ENCODE measurements at regions of chr11 and their contacts with region 1.

Region 1: DNA sequence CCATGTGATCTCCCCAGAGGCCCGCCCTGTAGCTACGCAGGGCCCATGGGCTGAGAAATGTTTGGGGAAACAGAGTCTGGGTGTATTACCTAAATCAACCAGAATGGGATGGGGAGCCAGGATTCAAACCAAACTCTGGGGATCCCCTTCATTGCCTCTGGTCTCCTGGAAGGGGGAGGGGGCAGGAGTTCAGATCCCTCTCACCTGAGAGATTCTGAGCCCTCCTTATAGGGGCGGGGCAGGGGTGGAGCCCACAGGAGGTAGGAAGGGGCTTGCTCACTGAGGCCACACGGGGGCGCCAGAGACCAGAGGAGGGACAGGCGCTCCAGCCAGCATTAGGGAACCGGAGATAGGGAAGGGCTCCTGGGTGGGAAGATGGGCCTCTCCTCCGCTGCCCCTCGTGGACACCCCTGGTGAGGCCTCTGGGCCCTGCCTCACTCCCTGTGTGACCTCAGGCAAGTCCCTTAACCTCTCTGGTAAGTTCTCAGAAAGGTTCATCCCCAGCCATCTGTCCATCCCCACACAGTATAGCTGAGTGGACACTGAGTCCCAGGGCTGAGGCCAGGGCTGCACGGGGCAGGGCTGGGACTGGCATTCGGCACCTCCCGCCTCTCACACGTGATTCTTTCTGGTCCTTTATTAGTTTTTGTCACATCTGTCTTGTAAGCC is 2.7 kb upstream of the CDC42BPG start:
- DNase-seq: peak; percentile 93 to 95 (median 94)
- ATAC-seq: peak; percentile 80 to 86 (median 83)
- H3K4me3 ChIP-seq: no peak overlapping the region
- H3K27ac ChIP-seq: no peak overlapping the region
- H3K4me1 ChIP-seq: peaks cover 0 to 24% (median 10%) of the 10 kb centered on the region in 4 donors
- H3K27me3 ChIP-seq: no peaks in the 10 kb centered on the region
- CTCF ChIP-seq: peak; percentile 99
- POLR2A ChIP-seq: no peak

Region 2: GRCh38 chr11:64787526-64788320 is 59.4 kb before region 1 on chr11:
- intact Hi-C with region 1: loop called in 1 of 2 experiments (anchors 10 kb)
- DNase-seq: peak; percentile 71 to 75 (median 71)
- ATAC-seq: peak; percentile 76 to 84 (median 84)
- H3K4me3 ChIP-seq: no peak overlapping the region
- H3K27ac ChIP-seq: no peak overlapping the region
- H3K4me1 ChIP-seq: no peaks in the 10 kb centered on the region
- H3K27me3 ChIP-seq: no peaks in the 10 kb centered on the region
- CTCF ChIP-seq: peak; percentile 66 to 77 (median 72)
- POLR2A ChIP-seq: no peak

Region 3: GRCh38 chr11:64894070-64894796 is 47.1 kb after region 1 on chr11:
- intact Hi-C with region 1: loop called (anchors 2 to 5 kb)
- DNase-seq: peak; percentile 91 to 93 (median 92)
- ATAC-seq: peak; percentile 57 to 66 (median 62)
- H3K4me3 ChIP-seq: peak overlapping the region in 2 of 3 donors; percentile 91
- H3K27ac ChIP-seq: peak overlapping the region in 2 of 3 donors; percentile 90 to 95
- H3K4me1 ChIP-seq: peaks cover 0 to 30% (median 11%) of the 10 kb centered on the region in 4 donors
- H3K27me3 ChIP-seq: no peaks in the 10 kb centered on the region
- CTCF ChIP-seq: peak; percentile 87 to 93 (median 88)
- POLR2A ChIP-seq: no peak

Measured in right lobe of liver (tissue), 6 donors.